ENCODE measurements at regions of chr21 and their contacts with region 1.

Region 1: DNA sequence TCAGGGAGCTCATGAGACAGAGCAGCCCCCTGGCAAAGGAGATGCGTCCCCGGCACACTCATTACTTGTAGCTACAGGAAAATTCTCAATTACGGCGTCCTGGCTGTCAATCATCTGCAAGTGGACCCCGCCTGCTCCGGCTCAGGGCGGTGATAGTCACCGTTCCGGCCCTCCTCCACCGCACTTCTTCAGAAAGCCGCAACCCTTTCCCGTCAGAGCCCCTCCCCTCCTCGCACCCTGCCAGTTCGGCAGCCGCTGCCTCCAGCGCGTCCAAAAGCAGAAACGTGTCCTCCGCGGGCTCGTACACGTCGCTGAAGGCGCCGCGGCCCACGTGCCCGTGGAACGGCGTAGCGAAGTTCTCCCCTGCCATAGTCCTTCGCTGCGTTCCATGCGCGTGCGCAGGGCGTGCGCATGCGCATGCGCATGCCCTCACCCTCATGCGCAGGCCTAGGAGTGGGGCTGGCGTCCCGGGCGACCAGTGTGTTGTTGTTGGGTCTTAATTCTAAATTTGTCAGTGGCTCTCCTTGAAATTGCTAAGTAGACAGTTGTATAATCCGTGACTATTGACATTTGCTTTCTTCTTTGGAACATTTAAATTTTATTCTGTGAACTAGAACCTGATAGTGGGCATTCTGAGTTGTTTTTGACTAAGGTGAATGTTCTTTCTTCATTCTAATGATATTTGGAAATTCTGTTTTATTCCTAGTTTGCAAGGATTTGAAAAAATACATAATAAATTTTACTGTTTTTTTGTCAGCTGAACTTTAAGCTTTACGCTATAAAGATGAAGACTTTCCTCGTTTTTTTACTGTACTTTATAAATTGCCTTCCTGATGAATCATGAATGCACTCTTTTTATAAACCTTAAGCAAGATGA is 107.5 kb downstream of the LTN1 start:
- DNase-seq: peak; percentile 71
- H3K4me3 ChIP-seq: peak overlapping the region; percentile 48
- H3K27me3 ChIP-seq: no peaks in the 10 kb centered on the region
- CTCF ChIP-seq: no peak

Region 2: DNA sequence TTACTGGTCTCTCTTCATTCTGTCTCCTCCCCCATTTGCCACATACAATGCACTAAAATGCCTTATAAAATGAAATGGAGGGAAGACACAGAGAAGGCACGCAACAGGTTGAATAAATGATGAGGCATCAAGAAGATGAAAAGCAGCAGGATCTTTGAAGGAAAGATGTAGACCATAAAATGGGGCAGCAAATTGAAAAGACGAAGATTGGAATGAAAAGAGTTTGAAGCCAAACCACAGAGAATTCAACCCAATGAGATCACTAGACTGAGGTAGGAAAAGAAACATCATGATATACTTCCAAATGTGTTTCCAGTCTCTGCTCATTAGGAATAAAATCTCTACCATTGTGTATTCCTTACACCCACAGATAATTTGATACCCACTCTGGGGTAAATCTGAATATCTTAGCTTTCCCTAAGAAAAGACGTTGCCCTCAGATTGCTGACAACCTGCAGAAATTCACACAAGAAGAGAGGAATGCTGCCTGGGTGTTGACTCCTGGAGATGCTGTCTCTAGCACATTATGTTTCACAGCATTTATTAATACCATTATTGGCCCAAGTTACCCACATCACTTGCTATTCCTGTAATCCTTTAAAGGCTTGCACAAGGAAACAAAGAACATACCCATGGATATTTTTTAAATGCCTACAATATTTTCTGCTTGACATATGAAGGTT is 123.4 kb before region 1 on chr21:
- CTCF ChIA-PET with region 1: no interaction called
- POLR2A ChIA-PET with region 1: no interaction called
- DNase-seq: peak; percentile 82
- H3K4me3 ChIP-seq: no peak overlapping the region
- H3K27me3 ChIP-seq: no peaks in the 10 kb centered on the region
- CTCF ChIP-seq: no peak

Region 3: DNA sequence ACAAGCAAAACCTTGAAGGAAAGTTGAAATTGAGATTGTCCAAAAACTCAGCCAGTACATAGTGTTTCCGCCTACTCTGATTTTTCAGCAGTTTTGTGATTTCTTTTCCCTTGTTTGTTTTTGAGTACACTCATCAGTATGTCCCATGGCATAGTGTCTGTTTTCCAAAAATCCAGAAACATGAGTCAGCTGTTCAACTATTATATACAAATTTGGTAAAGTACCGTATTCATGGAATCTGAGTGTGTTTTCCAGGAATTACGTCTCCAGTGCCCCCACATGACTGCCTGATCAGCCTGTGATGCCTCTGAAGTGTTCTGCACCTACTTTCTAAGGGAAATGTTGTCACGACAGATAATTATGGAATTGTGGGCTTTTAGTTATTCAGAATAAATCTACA is 79.3 kb before region 1 on chr21:
- CTCF ChIA-PET with region 1: interaction called, 3 read pairs
- POLR2A ChIA-PET with region 1: interaction called, 11 read pairs
- DNase-seq: peak; percentile 84
- H3K4me3 ChIP-seq: no peak overlapping the region
- H3K27me3 ChIP-seq: no peaks in the 10 kb centered on the region
- CTCF ChIP-seq: no peak

Region 4: GRCh38 chr21:28818663-28819278 is 66.4 kb before region 1 on chr21:
- CTCF ChIA-PET with region 1: interaction called, 3 read pairs
- POLR2A ChIA-PET with region 1: interaction called, 10 read pairs
- DNase-seq: peak; percentile 53
- H3K4me3 ChIP-seq: no peak overlapping the region
- H3K27me3 ChIP-seq: no peaks in the 10 kb centered on the region
- CTCF ChIP-seq: no peak